Activated naive CD4-positive, alpha-beta T cell treated with anti-CD3 and anti-CD28 coated beads for 36 hours (primary cell): ENCODE measurements at regions of chr3 and their contacts with region 1.

Region 1: DNA sequence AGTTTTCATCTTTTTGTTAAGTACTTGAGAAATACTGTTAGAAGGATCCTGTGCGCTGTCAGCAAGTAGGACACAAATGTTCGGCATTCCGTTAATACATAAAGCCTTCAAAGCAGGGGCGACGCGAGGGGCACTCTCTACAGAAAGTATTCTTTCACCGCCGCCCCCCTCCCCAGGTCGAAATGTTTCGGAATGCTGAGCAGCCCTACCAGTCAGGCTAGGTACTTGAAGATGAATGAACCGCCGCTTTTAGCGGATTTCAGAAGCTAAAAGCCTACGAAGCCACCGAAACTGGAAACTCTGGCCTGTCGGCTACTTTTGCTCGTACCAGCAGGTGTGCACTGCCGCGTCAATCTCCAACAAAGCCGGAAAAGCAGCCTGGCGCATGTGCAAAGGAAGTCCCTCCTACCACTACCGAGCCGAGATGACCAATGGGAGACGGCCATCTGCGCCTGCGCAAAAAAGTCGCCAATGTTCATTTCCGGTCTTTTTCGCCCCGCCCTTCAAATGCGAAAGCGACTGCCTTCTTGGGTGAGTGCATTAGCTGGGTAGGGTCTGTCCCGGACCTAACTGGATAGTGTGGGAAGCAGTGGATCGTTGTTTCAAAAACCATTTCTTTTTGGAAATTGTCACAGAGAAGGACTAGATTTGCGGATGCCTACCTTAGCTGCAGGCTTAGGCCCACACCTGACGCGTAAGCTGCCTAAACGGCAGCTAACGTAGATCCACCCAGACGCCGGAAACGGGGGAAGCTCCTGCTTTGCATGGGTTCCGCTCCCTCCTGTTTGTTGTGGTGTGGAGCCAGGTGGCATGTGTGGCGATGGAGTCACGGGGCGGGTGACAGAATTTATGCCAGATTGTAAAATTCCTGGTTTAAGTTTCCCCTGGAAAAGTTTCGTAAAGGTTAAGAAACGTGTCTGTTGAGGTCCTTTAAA is at the start of gene WDR5B:
- DNase-seq: peak; percentile 99
- H3K4me3 Mint-ChIP-seq: peak within 1 kb of the TSS; percentile 95
- H3K27ac Mint-ChIP-seq: peak within 1 kb of the TSS; percentile 98
- H3K4me1 Mint-ChIP-seq: peaks cover 50% of the 10 kb centered on the region
- H3K27me3 Mint-ChIP-seq: no peaks in the 10 kb centered on the region
- total RNA-seq, gene WDR5B: 2.3 to 2.9 TPM

Region 2: GRCh38 chr3:121749276-121750086 is 666.5 kb before region 1 on chr3 and contains the start of gene GOLGB1:
- CTCF ChIA-PET with region 1: no interaction called
- intact Hi-C with region 1: loop called (anchors 1 kb)
- DNase-seq: peak; percentile 97
- H3K4me3 Mint-ChIP-seq: no peak within 1 kb of the TSS
- H3K27ac Mint-ChIP-seq: no peak within 1 kb of the TSS
- H3K4me1 Mint-ChIP-seq: peaks cover 5% of the 10 kb centered on the region
- H3K27me3 Mint-ChIP-seq: no peaks in the 10 kb centered on the region
- total RNA-seq, gene GOLGB1: 18.2 to 19.7 TPM

Region 3: GRCh38 chr3:122305818-122306621 is 110.0 kb before region 1 on chr3:
- CTCF ChIA-PET with region 1: no interaction called
- intact Hi-C with region 1: no loop called
- DNase-seq: peak; percentile 32
- H3K4me3 Mint-ChIP-seq: no peak overlapping the region
- H3K27ac Mint-ChIP-seq: no peak overlapping the region
- H3K4me1 Mint-ChIP-seq: no peaks in the 10 kb centered on the region
- H3K27me3 Mint-ChIP-seq: peaks cover 1% of the 10 kb centered on the region

Region 4: DNA sequence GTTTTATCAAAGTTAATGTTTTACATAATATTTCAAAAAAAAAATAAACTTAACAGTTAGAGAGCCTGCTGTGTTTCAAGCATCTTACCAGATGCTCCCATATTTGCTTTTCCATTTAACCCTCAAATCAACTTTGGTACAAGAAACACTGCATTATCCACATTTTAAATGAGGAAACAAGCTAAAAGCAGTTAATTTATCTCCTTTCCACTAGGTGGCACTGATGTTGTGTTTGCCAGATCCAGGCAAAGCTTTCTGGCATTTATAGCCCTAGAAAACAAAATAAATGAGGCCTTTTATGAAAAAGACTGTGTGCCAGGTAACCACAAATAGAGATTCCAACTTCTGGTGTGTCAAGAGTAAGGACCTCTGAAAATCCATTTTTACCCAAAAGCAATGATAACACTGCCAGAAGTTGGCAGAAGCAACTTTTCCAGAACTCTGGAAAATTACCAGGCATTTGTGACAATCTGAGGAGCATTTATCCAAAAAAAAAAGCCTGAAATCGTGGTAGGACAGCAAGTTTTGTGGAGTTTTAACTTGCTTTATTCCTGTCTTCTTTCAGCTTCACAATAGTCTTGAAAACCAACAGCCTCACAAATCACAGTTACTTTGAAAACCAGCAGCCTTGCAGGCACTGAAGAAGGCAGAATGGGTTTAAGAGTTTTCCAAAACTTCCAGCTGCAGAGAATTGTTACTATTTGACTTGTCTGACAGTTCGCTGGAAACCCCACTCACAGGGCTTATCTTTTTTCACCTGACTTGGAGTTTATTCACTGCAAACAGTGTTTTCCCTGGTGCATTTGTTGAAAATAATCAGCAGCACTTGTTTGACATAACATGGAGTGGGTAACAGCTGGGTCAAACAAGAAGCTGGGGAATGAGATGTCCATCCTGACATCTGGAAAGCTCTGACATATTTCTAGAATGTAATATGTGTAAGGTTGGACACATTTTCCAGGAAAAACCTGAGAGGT is 22.8 kb before region 1 on chr3:
- CTCF ChIA-PET with region 1: interaction called, 5 read pairs
- intact Hi-C with region 1: loop called (anchors 1 kb)
- DNase-seq: peak; percentile 34
- H3K4me3 Mint-ChIP-seq: no peak overlapping the region
- H3K27ac Mint-ChIP-seq: no peak overlapping the region
- H3K4me1 Mint-ChIP-seq: peaks cover 41% of the 10 kb centered on the region
- H3K27me3 Mint-ChIP-seq: no peaks in the 10 kb centered on the region

Region 5: GRCh38 chr3:122533931-122534334 is 117.9 kb after region 1 on chr3:
- CTCF ChIA-PET with region 1: no interaction called
- intact Hi-C with region 1: loop called (anchors 1 kb)
- DNase-seq: peak; percentile 77
- H3K4me3 Mint-ChIP-seq: no peak overlapping the region
- H3K27ac Mint-ChIP-seq: peak overlapping the region; percentile 28
- H3K4me1 Mint-ChIP-seq: peaks cover 35% of the 10 kb centered on the region
- H3K27me3 Mint-ChIP-seq: no peaks in the 10 kb centered on the region

Region 6: DNA sequence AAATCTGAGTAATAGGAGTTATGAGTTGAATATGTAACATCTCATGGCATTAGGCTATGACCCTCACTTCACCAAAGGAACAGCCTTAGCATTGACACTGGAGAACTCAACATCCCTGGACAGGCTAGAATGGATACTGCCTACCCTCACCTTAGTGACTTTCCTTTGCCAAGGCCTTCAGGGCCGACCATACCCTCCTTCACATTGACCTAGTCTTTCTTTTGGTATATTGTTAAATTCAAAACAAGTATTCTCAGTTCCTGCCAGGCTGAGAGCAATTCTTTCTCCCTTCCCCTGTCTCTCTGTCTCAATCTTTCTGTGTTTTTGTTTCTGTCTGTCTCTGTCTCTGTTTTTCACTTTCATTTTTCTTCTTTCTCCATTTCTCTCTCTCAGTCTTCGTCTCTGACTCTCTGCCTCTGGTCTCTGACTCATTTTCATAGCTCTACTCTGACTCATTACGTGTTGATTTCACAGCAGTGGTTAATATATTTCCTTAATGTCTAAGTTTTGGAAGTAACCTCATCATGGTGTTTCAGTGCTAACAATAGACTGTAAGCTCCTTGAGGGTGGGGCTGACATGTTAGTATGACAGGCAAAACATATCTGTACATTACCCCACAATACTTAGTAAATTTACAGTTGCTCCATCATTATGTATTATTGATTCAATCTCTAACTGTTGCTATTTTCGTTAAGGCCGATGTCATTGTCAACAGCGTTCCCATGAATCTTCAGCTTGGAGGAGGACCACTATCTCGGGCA is 194.0 kb after region 1 on chr3:
- CTCF ChIA-PET with region 1: no interaction called
- intact Hi-C with region 1: loop called (anchors 1 kb)
- DNase-seq: peak; percentile 51
- H3K4me3 Mint-ChIP-seq: peak overlapping the region; percentile 40
- H3K27ac Mint-ChIP-seq: peak overlapping the region; percentile 90
- H3K4me1 Mint-ChIP-seq: peaks cover 24% of the 10 kb centered on the region
- H3K27me3 Mint-ChIP-seq: no peaks in the 10 kb centered on the region

Region 7: DNA sequence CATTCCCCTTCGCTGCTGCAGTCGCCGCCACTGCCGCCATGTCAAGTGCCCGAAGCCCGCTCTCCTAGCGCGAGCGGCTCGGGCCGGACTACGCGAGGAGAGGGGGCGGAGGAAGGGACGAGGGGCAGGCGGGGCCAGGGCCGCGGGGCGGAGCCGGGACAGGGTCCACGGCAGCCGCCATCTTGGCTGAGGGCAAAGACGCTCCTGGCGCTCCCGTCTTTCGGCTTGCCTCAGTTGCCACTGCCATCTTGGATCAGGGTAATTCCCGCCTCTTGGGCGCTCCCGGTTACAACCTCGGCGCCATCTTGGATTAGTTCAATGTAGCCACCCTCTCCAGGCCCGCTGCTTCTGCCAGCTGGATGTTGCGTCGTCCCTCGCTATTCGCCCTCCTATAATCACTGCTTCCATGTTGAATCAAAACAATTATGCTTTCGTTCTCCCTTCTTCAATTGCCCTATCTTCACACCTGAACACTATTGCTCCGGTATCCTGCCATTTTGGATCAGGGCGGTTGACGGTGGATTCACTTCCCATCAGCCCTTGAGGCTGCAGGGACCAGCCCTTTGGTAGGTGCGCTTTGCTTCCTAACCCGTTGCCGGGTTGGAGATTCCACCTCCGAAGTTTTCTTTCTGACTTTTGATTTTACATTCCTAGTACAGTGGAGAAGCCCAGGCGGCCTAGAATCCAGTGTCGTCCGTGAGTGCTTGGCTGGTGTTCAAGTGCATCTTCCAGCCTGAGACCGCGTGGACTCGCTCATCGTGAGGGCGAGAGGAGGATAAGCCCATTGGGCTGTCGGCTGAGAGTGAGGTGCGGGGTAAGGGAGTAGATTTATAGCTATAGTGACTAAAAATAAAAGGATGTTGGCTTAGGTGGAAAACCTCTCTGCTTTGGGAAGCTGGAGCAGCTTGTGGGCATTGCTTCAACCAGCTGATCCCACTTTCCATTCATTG is 1169.3 kb after region 1 on chr3 and contains the start of gene HACD2:
- CTCF ChIA-PET with region 1: no interaction called
- intact Hi-C with region 1: loop called (anchors 1 kb)
- DNase-seq: peak; percentile 96
- H3K4me3 Mint-ChIP-seq: no peak within 1 kb of the TSS
- H3K27ac Mint-ChIP-seq: peak within 1 kb of the TSS; percentile 57
- H3K4me1 Mint-ChIP-seq: peaks cover 22% of the 10 kb centered on the region
- H3K27me3 Mint-ChIP-seq: no peaks in the 10 kb centered on the region
- total RNA-seq, gene HACD2: 25.9 TPM